ENCODE measurements at regions of chr1 and their contacts with region 1.

Region 1: GRCh38 chr1:211133836-211134669 is at the start of gene KCNH1:
- DNase-seq: peak; percentile 91
- H3K4me3 Mint-ChIP-seq: peak within 1 kb of the TSS; percentile 65
- H3K27ac Mint-ChIP-seq: no peak within 1 kb of the TSS
- H3K4me1 Mint-ChIP-seq: no peaks in the 10 kb centered on the region
- H3K27me3 Mint-ChIP-seq: peaks cover 81% of the 10 kb centered on the region
- CTCF ChIP-seq: peak; percentile 98
- total RNA-seq, gene KCNH1: not detected in 2 replicates

Region 2: GRCh38 chr1:210448297-210448892 is 685.7 kb before region 1 on chr1:
- CTCF ChIA-PET with region 1: interaction called, 43 read pairs
- intact Hi-C with region 1: loop called (anchors 1 kb)
- DNase-seq: peak; percentile 53
- H3K4me3 Mint-ChIP-seq: no peak overlapping the region
- H3K27ac Mint-ChIP-seq: no peak overlapping the region
- H3K4me1 Mint-ChIP-seq: peaks cover 10% of the 10 kb centered on the region
- H3K27me3 Mint-ChIP-seq: peaks cover 28% of the 10 kb centered on the region
- CTCF ChIP-seq: peak; percentile 58

Region 3: GRCh38 chr1:210711825-210712612 is 422.0 kb before region 1 on chr1:
- CTCF ChIA-PET with region 1: interaction called, 3 read pairs
- intact Hi-C with region 1: loop called (anchors 5 kb)
- DNase-seq: peak; percentile 7
- H3K4me3 Mint-ChIP-seq: no peak overlapping the region
- H3K27ac Mint-ChIP-seq: no peak overlapping the region
- H3K4me1 Mint-ChIP-seq: no peaks in the 10 kb centered on the region
- H3K27me3 Mint-ChIP-seq: peaks cover 54% of the 10 kb centered on the region
- CTCF ChIP-seq: peak; percentile 33

Region 4: GRCh38 chr1:211258756-211259637 is 124.9 kb after region 1 on chr1 and contains the start of gene RCOR3:
- CTCF ChIA-PET with region 1: interaction called, 5 read pairs
- intact Hi-C with region 1: loop called (anchors 5 kb)
- DNase-seq: peak; percentile 96
- H3K4me3 Mint-ChIP-seq: peak within 1 kb of the TSS; percentile 70
- H3K27ac Mint-ChIP-seq: peak within 1 kb of the TSS; percentile 62
- H3K4me1 Mint-ChIP-seq: peaks cover 18% of the 10 kb centered on the region
- H3K27me3 Mint-ChIP-seq: no peaks in the 10 kb centered on the region
- CTCF ChIP-seq: peak; percentile 80
- total RNA-seq, gene RCOR3: 48.0 and 54.1 TPM in 2 replicates

Region 5: GRCh38 chr1:211654838-211655787 is 521.1 kb after region 1 on chr1:
- CTCF ChIA-PET with region 1: no interaction called
- intact Hi-C with region 1: loop called (anchors 5 kb)
- DNase-seq: peak; percentile 93
- H3K4me3 Mint-ChIP-seq: no peak overlapping the region
- H3K27ac Mint-ChIP-seq: no peak overlapping the region
- H3K4me1 Mint-ChIP-seq: peaks cover 16% of the 10 kb centered on the region
- H3K27me3 Mint-ChIP-seq: no peaks in the 10 kb centered on the region
- CTCF ChIP-seq: peak; percentile 93

Measured in Calu3 (cell line).